ENCODE measurements at regions of chr3 and their contacts with region 1.

Region 1: DNA sequence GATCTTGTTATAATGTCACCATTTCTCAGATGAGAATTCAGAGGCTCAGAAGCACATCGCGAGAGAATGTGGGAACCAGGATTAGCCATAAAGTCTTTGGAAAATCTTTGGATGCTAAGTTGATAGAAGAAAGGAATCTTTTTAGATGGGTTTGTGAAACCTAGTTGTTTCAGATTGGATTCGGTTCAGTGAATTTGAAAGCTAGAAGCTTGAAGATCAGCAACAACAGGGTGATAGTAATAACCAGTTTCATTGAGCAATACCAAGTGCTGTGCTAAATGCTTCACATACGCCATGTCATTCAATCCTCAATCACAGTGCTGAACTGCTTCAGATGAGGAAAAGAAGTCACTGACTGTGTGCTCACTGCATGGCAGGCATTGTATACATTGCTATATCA is 47.4 kb upstream of the MITF start:
- DNase-seq: no peak
- H3K4me3 ChIP-seq: no peak overlapping the region
- H3K27ac ChIP-seq: no peak overlapping the region
- H3K4me1 ChIP-seq: no peaks in the 10 kb centered on the region
- H3K27me3 ChIP-seq: no peaks in the 10 kb centered on the region
- CTCF ChIP-seq: no peak

Region 2: GRCh38 chr3:69770976-69771634 is 79.2 kb after region 1 on chr3:
- intact Hi-C with region 1: no loop called
- DNase-seq: no peak
- H3K4me3 ChIP-seq: no peak overlapping the region
- H3K27ac ChIP-seq: no peak overlapping the region
- H3K4me1 ChIP-seq: no peaks in the 10 kb centered on the region
- H3K27me3 ChIP-seq: no peaks in the 10 kb centered on the region
- CTCF ChIP-seq: no peak

Region 3: DNA sequence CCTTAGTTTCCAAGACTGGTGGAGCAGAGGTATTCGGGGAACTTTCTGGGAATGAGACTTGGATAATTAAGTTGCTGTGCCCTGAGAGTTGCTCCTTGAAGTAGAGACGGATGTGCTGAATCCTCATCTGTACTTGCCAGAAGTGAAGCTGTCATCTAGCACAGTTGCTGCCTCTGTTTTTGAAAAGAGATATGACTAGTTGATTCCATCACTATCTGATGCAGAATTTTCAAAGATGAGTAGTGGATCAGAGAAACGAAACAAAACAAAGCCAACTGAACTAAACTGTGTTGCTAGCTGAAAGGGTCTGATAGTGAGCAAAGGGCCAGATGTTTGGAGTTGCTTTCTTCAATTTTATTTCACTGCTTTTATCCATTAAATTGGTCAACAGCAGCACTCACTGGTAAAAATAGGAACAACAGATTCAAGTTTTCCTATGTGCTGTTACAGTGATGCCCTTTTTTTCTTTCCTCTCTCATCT is 100.1 kb after region 1 on chr3:
- intact Hi-C with region 1: loop called (anchors 5 kb)
- DNase-seq: no peak
- H3K4me3 ChIP-seq: no peak overlapping the region
- H3K27ac ChIP-seq: no peak overlapping the region
- H3K4me1 ChIP-seq: no peaks in the 10 kb centered on the region
- H3K27me3 ChIP-seq: peaks cover 4% of the 10 kb centered on the region
- CTCF ChIP-seq: no peak

Region 4: GRCh38 chr3:69855436-69856162 is 163.7 kb after region 1 on chr3:
- intact Hi-C with region 1: loop called (anchors 10 kb)
- DNase-seq: no peak
- H3K4me3 ChIP-seq: no peak overlapping the region
- H3K27ac ChIP-seq: no peak overlapping the region
- H3K4me1 ChIP-seq: no peaks in the 10 kb centered on the region
- H3K27me3 ChIP-seq: no peaks in the 10 kb centered on the region
- CTCF ChIP-seq: no peak

Region 5: DNA sequence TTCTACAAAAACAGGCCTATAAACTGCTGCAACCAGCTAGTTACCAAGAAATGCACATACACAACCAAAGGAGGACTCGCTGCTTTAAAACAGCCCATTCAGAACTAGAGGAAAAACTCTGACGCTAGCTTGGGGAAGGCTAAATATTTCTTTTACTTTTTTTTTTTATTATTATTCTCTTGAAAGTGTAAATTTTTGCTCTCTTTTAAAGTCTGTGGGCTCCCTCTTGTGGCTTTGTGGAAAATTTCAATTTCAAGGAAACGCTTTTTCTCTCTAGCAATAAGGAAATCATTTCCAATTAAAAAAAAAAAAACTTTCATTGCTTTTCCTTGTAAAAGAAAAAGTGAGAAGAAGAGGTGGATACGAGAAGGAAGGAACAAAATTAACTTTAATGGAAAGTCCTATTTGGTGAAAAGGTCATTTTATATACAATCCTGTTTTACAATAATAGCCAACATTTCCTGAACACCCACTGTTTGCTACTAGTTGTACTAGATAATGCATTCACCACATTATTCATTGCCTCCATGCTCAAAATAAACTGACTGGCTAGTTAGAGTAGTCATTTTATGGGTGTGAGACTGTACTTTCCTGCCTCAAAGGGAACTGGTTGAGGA is 256.5 kb after region 1 on chr3:
- intact Hi-C with region 1: loop called (anchors 5 kb)
- DNase-seq: no peak
- H3K4me3 ChIP-seq: no peak overlapping the region
- H3K27ac ChIP-seq: no peak overlapping the region
- H3K4me1 ChIP-seq: no peaks in the 10 kb centered on the region
- H3K27me3 ChIP-seq: no peaks in the 10 kb centered on the region
- CTCF ChIP-seq: peak; percentile 49

Measured in colonic mucosa (tissue), 4 donors.